ENCODE measurements at regions of chr2 and their contacts with region 1.

Region 1: GRCh38 chr2:96320728-96321622 is 4.1 kb upstream of the ITPRIPL1 start:
- DNase-seq: peak; percentile 52
- CTCF ChIP-seq: no peak

Region 2: GRCh38 chr2:96305091-96305978 is 15.6 kb before region 1 on chr2 and contains the start of gene SNRNP200:
- CTCF ChIA-PET with region 1: interaction called, 27 read pairs
- POLR2A ChIA-PET with region 1: interaction called, 4 read pairs
- DNase-seq: peak; percentile 92
- CTCF ChIP-seq: no peak

Region 3: GRCh38 chr2:96336104-96336775 is 15.3 kb after region 1 on chr2:
- CTCF ChIA-PET with region 1: interaction called, 30 read pairs
- POLR2A ChIA-PET with region 1: interaction called, 12 read pairs
- DNase-seq: no peak
- CTCF ChIP-seq: no peak